Sigmoid colon (tissue), 7 donors: ENCODE measurements at regions of chr19 and their contacts with region 1.

Region 1: DNA sequence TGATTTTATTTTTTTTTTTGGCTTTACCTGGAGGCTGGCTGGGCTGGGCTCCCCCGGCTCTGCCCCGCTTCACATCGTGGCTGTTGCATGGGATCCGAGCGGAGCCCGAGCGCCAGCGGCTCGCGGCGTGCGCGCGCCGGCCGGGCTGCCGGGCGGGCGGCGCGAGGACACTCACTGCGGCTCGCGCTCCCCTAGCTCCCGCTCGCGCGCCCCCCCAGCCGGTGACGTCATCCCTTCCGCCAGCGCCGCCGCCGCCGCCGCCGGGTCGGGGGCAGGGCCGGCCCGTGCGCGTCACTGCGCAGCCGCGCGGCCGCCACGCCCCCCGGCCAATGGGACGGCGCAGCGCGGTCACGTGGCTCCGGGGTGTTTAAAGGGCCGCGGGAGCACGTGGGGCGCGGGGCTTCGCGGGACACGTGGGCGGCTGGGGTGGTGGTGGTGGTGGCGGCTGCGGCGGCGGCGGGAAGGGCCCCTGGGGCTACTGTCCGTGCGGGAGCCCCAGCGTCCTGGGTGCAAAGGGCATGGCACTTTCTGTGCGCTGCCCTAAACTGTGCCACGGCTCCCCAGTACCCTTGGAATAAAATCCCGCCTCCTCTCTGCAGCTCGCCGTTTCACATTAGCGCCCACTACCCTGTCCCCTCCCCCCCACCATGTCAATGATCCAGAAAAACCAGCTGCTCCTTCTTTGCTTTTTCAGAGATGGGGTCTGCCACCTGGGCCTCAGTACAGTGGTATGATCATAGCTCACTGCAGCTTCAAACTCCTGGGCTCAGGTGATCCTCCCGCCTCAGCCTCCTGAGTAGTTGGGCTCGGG is at the start of gene PTPRS:
- DNase-seq: peak; percentile 88
- H3K4me3 ChIP-seq: peak within 1 kb of the TSS; percentile 40 to 77 (median 60)
- H3K27ac ChIP-seq: peak within 1 kb of the TSS; percentile 35 to 73 (median 56)
- H3K4me1 ChIP-seq: peaks cover 0 to 26% (median 24%) of the 10 kb centered on the region in 4 donors
- H3K27me3 ChIP-seq: peaks cover 16 to 41% (median 41%) of the 10 kb centered on the region in 3 donors
- CTCF ChIP-seq: no peak
- EP300 ChIP-seq: no peak
- POLR2A ChIP-seq: no peak
- total RNA-seq, gene PTPRS: 120 to 211 (median 139) TPM

Region 2: GRCh38 chr19:5292822-5293611 is 47.8 kb before region 1 on chr19:
- intact Hi-C with region 1: loop called (anchors 1 kb)
- DNase-seq: peak; percentile 86
- H3K4me3 ChIP-seq: peak overlapping the region; percentile 72 to 94 (median 82)
- H3K27ac ChIP-seq: peak overlapping the region; percentile 89 to 95 (median 92)
- H3K4me1 ChIP-seq: peaks cover 0 to 61% (median 57%) of the 10 kb centered on the region in 4 donors
- H3K27me3 ChIP-seq: no peaks in the 10 kb centered on the region
- CTCF ChIP-seq: no peak
- EP300 ChIP-seq: no peak
- POLR2A ChIP-seq: no peak

Region 3: DNA sequence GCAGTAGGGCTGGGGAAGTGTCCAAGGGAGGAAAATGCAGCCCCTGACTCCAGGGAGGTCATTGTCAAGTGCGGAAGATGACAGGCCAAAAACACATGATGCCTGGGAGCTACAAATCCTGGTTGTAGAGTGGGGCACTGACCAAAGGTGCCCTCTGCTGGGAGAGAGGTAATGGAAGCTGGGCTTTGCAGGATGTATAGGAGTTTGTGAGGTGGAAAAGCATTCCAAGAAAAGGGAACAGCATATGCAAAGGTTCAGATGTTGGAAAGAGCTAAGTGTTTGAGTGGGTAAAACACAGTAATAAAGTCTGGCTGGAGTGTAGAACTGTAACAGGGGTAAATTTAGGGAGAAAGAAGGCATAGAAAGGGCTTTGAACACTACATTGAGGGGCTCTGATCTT is 46.6 kb after region 1 on chr19:
- intact Hi-C with region 1: no loop called
- DNase-seq: no peak
- H3K4me3 ChIP-seq: no peak overlapping the region
- H3K27ac ChIP-seq: no peak overlapping the region
- H3K4me1 ChIP-seq: no peaks in the 10 kb centered on the region
- H3K27me3 ChIP-seq: peaks cover 0 to 46% (median 27%) of the 10 kb centered on the region in 3 donors
- CTCF ChIP-seq: no peak
- EP300 ChIP-seq: no peak
- POLR2A ChIP-seq: no peak